Astrocyte of the cerebellum (primary cell): ENCODE measurements at regions of chr3 and their contacts with region 1.

Region 1: DNA sequence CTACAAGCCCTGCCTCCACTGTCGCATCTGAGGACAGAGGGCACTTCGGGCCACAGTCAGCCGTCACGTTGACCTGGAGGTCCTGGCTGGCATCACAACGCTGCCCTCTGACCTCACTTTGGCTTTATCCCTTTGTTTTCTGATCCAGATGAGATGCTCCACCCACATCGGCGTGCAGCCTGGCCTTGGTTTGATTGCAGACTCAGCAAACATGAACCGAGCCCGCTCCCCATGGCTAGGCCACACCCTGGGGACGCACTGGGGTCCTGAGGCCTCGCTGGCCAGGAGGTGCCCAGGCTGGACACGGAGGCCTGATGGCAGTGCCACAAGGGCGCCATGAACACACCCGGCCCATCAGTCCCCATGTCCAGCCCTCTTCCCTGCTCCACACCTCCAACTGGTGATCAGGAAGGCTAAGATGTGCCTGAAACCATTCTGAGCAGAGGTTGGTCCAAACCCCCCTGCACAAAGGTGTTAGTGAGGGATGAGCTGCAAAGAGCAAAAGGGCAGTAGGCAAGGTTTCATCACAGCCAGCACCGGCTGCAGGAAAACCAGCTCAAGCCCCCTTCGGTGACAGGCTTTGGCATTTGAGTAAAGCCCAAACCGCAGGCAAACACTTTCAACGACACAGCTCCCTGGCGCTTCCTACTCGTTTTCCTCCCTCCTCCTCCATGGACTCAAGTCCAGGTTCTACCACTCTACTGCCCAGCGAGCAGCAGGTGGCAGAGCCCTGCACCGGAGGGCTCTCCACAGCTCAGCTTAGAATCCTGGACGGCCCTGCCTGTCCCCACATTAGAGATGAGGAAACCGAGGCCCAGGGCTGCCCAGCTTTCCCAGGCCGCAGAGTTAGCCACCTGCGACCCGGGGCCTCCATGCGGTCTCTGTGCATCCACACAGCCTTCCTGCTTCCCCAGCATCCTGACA is 165.8 kb downstream of the NUP210 start:
- DNase-seq: no peak
- H3K4me3 ChIP-seq: no peak overlapping the region
- CTCF ChIP-seq: no peak

Region 2: DNA sequence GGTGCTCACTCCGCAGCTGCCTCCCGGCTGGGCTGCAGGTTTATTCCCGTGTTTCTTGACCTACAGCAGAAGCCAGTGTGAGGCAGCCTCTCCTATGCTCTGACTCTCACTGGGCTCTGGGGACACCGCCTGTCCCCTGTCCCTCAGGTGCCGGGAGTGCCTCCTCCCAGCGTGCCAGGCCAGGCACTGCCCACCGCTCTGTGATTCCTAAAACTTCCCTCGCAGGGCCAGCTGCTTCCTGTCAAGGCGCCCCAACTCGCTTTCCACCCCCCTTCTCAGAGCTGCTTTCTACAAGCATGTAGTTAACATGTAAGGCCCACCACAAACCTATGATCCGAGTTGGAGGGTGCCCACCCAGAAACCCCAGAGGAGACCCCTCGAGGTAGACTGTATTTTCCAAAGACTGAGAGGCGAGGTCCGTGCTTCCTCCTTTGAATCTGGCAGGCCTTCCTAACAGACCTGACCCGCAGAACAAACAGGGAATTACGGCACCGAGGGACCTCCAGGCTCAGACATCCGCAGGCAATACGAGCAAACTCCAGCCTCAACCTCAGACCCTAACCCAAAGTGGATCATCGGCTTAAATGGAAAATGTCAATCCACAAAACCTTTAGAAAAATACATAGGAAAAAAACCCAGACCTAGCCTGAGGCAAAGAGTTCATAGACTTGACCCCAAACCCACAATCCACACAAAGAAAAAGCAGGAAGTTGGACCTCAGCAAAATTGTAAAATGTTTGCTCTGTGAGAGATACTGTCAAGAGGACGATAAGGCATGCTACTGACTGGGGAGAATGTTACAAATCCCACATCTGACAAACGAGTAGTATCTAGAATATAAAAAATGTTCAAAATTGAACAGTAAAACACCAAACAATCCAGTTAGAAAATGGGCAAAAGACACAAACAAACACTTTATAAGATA is 59.7 kb before region 1 on chr3:
- in situ Hi-C with region 1: loop called (anchors 5 kb)
- DNase-seq: no peak
- H3K4me3 ChIP-seq: no peak overlapping the region
- CTCF ChIP-seq: no peak

Region 3: GRCh38 chr3:13324835-13325501 is 70.7 kb after region 1 on chr3:
- in situ Hi-C with region 1: loop called (anchors 5 kb)
- DNase-seq: no peak
- H3K4me3 ChIP-seq: no peak overlapping the region
- CTCF ChIP-seq: no peak